ENCODE measurements at regions of chr16 and their contacts with region 1.

Region 1: GRCh38 chr16:2531767-2532493 is 722 bp upstream of the CEMP1 start:
- DNase-seq: peak; percentile 97
- H3K4me3 Mint-ChIP-seq: peak overlapping the region; percentile 98
- H3K27ac Mint-ChIP-seq: peak overlapping the region; percentile 100
- H3K4me1 Mint-ChIP-seq: peaks cover 11% of the 10 kb centered on the region
- H3K27me3 Mint-ChIP-seq: no peaks in the 10 kb centered on the region
- CTCF ChIP-seq: no peak

Region 2: DNA sequence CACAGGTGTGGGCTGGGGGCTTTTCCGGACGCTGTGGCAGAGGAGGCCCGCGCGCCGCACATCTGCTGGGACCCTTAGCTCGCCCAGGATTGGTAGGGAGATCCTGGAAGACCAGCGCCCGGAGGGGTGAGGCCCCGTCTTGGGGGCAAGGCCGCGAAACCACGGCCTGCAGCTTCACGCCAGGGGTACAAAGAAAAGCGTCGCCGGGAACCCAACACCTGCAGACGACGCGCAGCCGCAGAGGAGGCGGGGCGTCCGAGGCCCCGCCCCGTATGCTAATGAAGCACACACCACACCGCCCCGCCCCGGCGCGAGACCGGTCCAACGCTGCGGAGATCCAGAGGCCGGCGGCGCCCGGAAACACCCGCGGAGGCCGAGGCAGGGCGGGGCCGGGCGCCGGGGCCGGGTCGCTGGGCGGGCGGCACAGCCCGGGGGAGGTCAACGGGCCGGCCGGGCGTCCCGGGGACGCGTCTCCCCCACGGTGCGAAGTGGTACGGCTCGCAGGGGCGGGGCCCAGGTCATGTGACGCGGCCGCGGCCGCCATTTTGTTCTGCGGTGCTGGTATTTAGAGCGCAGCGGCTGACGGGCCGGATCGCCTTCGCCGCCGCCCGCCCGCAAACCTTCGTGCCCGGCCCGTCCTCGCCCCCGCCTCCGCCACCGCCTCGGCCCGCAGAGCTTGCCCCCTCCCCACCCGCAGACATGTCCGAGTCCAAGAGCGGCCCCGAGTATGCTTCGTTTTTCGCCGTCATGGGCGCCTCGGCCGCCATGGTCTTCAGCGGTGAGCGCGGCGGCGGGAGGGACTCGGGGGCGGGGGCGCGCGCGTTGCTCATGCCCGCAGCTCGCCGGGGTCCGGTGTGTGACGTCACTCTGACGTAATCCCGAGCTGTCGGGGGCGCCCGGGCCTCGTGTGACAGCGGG is 18.3 kb before region 1 on chr16 and contains the start of gene ATP6V0C:
- CTCF ChIA-PET with region 1: no interaction called
- POLR2A ChIA-PET with region 1: interaction called, 62 read pairs
- intact Hi-C with region 1: no loop called
- DNase-seq: peak; percentile 88
- H3K4me3 Mint-ChIP-seq: peak within 1 kb of the TSS; percentile 87
- H3K27ac Mint-ChIP-seq: peak within 1 kb of the TSS; percentile 94
- H3K4me1 Mint-ChIP-seq: peaks cover 29% of the 10 kb centered on the region
- H3K27me3 Mint-ChIP-seq: no peaks in the 10 kb centered on the region
- CTCF ChIP-seq: no peak
- total RNA-seq, gene ATP6V0C: 173 and 198 TPM in 2 replicates

Region 3: GRCh38 chr16:2520092-2520783 is 11.7 kb before region 1 on chr16 and contains the start of gene AMDHD2:
- CTCF ChIA-PET with region 1: interaction called, 5 read pairs
- POLR2A ChIA-PET with region 1: interaction called, 62 read pairs
- intact Hi-C with region 1: no loop called
- DNase-seq: peak; percentile 86
- H3K4me3 Mint-ChIP-seq: peak within 1 kb of the TSS; percentile 78
- H3K27ac Mint-ChIP-seq: peak within 1 kb of the TSS; percentile 54
- H3K4me1 Mint-ChIP-seq: peaks cover 38% of the 10 kb centered on the region
- H3K27me3 Mint-ChIP-seq: no peaks in the 10 kb centered on the region
- CTCF ChIP-seq: no peak
- total RNA-seq, gene AMDHD2: 15.8 and 26.5 TPM in 2 replicates

Region 4: DNA sequence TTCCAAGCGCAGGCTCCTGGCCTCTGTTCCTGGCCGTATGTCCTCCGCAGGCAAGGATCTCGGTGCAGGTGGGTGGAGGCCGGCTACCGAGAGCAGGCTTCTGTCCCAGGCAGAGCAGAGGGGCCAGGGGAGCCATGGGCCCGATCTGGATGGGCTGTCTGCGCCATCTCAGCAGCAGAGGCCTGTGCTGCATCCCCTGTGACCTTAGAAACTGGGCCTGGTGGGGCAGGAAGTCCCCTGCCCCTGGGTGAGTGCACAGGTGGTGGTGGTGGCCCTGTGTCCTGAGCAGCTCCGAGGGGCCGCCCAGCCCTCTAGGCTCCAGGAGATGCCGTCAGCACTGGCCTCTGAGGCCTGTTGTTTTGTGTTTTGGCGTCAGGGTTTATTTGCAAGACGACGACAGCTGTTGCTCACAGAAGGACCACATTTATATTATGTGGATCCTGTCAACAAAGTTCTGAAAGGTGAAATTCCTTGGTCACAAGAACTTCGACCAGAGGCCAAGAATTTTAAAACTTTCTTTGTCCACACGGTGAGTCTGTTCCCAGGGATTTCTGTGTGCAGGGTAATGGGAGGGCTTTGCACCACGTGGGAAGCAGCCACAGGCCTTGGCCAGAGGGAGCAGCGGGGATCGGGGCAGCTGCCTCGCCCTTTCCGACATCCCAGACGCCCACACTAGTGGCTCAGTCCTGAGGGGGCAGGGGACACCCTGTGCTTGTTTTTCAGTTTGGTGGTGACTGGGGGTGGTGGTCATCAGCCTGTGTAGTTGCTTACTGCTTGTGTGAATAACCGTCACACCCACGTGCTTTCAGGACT is 65.0 kb after region 1 on chr16:
- CTCF ChIA-PET with region 1: no interaction called
- POLR2A ChIA-PET with region 1: no interaction called
- intact Hi-C with region 1: no loop called
- DNase-seq: no peak
- H3K4me3 Mint-ChIP-seq: no peak overlapping the region
- H3K27ac Mint-ChIP-seq: no peak overlapping the region
- H3K4me1 Mint-ChIP-seq: no peaks in the 10 kb centered on the region
- H3K27me3 Mint-ChIP-seq: no peaks in the 10 kb centered on the region
- CTCF ChIP-seq: no peak

Measured in MCF 10A (cell line).